Thyroid gland (tissue), 4 donors: ENCODE measurements at regions of chr22 and their contacts with region 1.

Region 1: GRCh38 chr22:41091132-41092022 is 1.0 kb upstream of the EP300 start:
- DNase-seq: peak; percentile 99
- H3K4me3 ChIP-seq: peak overlapping the region; percentile 78 to 92 (median 87)
- H3K27ac ChIP-seq: peak overlapping the region; percentile 99 to 100 (median 100)
- H3K4me1 ChIP-seq: peaks cover 12 to 17% of the 10 kb centered on the region in 2 donors
- H3K27me3 ChIP-seq: no peaks in the 10 kb centered on the region
- CTCF ChIP-seq: no peak
- POLR2A ChIP-seq: peak; percentile 74 to 94

Region 2: GRCh38 chr22:40950962-40951794 is 140.2 kb before region 1 on chr22 and contains the start of gene RBX1:
- intact Hi-C with region 1: loop called (anchors 2 kb)
- DNase-seq: peak; percentile 99
- H3K4me3 ChIP-seq: peak within 1 kb of the TSS; percentile 65 to 91 (median 86)
- H3K27ac ChIP-seq: peak within 1 kb of the TSS; percentile 86 to 92 (median 91)
- H3K4me1 ChIP-seq: peaks cover 6 to 11% of the 10 kb centered on the region in 2 donors
- H3K27me3 ChIP-seq: no peaks in the 10 kb centered on the region
- CTCF ChIP-seq: no peak
- POLR2A ChIP-seq: peak in 1 of 2 donors; percentile 63
- total RNA-seq, gene RBX1: 52.5 to 79.8 (median 61.6) TPM

Region 3: GRCh38 chr22:41022470-41023298 is 68.7 kb before region 1 on chr22:
- intact Hi-C with region 1: loop called (anchors 5 kb)
- DNase-seq: peak; percentile 96
- H3K4me3 ChIP-seq: peak overlapping the region; percentile 10 to 77 (median 38)
- H3K27ac ChIP-seq: peak overlapping the region; percentile 98 to 99 (median 99)
- H3K4me1 ChIP-seq: peaks cover 10 to 20% of the 10 kb centered on the region in 2 donors
- H3K27me3 ChIP-seq: no peaks in the 10 kb centered on the region
- CTCF ChIP-seq: peak in 1 of 6 experiments; percentile 7
- POLR2A ChIP-seq: peak in 1 of 2 donors; percentile 85

Region 4: DNA sequence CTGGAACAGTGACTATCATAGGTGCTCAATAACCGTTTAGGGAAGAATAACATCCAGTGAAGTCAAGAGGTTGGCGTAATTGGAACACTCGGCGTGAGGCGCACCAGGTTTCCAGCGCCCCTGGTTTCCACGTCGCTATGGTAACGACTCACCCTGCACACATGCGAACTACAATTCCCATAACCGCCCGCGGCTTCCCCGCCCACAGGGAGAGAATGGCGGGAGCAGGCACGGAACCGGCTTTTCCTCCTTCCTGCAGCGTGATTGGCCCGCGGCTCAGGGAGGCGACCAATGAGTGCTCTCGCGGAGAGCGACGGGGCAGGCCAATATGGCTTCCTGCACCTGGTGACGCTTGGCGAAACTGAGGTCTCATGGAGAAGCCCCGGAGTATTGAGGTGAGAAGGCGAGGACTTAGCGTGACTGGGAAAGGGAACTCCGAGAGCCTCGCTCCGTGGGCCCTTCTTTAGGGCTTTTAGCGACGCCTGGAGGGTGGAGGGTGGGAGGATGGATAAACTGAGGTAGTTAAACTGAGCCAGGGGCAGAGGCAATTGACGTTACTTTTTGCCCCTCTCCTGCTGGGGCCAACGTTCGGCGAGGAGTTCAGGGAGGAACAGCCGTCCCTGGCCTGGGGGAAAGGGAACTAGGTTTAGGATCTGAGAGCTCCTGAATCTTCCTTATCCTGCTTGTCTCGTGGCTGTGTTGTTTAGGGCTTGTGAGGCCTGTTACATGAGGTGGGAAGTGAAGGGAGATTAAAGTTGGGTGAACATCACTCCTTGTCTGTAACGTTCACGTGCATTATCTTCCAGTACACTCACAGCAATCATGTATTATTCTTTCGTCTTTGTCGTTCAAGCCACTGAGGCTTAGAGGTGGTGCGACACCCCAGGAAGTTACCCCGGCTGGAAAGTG is 113.9 kb after region 1 on chr22 and contains the start of gene L3MBTL2:
- intact Hi-C with region 1: no loop called
- DNase-seq: peak; percentile 97
- H3K4me3 ChIP-seq: peak within 1 kb of the TSS; percentile 69 to 91 (median 70)
- H3K27ac ChIP-seq: peak within 1 kb of the TSS in 1 of 3 donors; percentile 69
- H3K4me1 ChIP-seq: peaks cover 4 to 7% of the 10 kb centered on the region in 2 donors
- H3K27me3 ChIP-seq: no peaks in the 10 kb centered on the region
- CTCF ChIP-seq: no peak
- POLR2A ChIP-seq: peak in 1 of 2 donors; percentile 50
- total RNA-seq, gene L3MBTL2: 17.2 to 29.2 (median 20.7) TPM

Region 5: GRCh38 chr22:41377846-41378245 is 286.5 kb after region 1 on chr22:
- intact Hi-C with region 1: no loop called
- DNase-seq: no peak
- H3K4me3 ChIP-seq: no peak overlapping the region
- H3K27ac ChIP-seq: no peak overlapping the region
- H3K4me1 ChIP-seq: peaks cover 12 to 15% of the 10 kb centered on the region in 2 donors
- H3K27me3 ChIP-seq: no peaks in the 10 kb centered on the region
- CTCF ChIP-seq: no peak
- POLR2A ChIP-seq: no peak